ENCODE measurements at regions of chr15 and their contacts with region 1.

Region 1: GRCh38 chr15:75801859-75802593 is 41.2 kb upstream of the UBE2Q2 start:
- DNase-seq: peak; percentile 84
- H3K4me3 ChIP-seq: peak overlapping the region in 1 of 4 donors; percentile 31
- H3K27ac ChIP-seq: no peak overlapping the region
- H3K4me1 ChIP-seq: peaks cover 0 to 5% (median 2%) of the 10 kb centered on the region in 4 donors
- H3K27me3 ChIP-seq: peaks cover 39% of the 10 kb centered on the region
- CTCF ChIP-seq: peak; percentile 83 to 96 (median 93)
- EP300 ChIP-seq: no peak
- POLR2A ChIP-seq: no peak

Region 2: GRCh38 chr15:74373731-74374647 is 1428.0 kb before region 1 on chr15:
- in situ Hi-C with region 1: no loop called
- intact Hi-C with region 1: no loop called
- DNase-seq: peak; percentile 95
- H3K4me3 ChIP-seq: peak overlapping the region; percentile 38 to 70 (median 47)
- H3K27ac ChIP-seq: peak overlapping the region; percentile 33 to 57 (median 46)
- H3K4me1 ChIP-seq: peaks cover 9 to 19% (median 13%) of the 10 kb centered on the region in 4 donors
- H3K27me3 ChIP-seq: peaks cover 13% of the 10 kb centered on the region
- CTCF ChIP-seq: peak; percentile 80 to 93 (median 83)
- EP300 ChIP-seq: no peak
- POLR2A ChIP-seq: no peak

Region 3: DNA sequence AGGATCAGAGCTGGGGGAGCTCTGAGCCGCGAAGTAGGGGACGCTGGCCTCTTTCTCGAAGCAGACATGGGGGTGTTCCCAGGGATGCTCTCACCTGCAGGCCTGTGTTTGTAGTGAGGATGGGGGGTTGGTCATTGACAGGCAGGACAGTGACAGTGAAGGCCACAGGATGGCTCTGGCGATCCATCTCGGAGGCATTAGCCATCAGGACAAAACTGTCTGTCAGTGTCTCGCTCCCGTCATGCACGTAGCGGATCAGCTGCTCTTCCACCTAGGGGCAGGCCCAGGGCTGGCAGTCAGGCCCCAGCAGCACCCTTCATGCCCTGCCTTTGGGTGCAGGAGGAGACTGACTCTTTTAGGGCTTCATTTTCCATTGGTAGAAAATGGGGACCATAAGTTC is 117.4 kb before region 1 on chr15:
- in situ Hi-C with region 1: loop called in 1 of 4 experiments (anchors 10 kb)
- intact Hi-C with region 1: loop called (anchors 5 kb)
- DNase-seq: no peak
- H3K4me3 ChIP-seq: no peak overlapping the region
- H3K27ac ChIP-seq: no peak overlapping the region
- H3K4me1 ChIP-seq: peaks cover 0 to 10% (median 4%) of the 10 kb centered on the region in 4 donors
- H3K27me3 ChIP-seq: no peaks in the 10 kb centered on the region
- CTCF ChIP-seq: no peak
- EP300 ChIP-seq: no peak
- POLR2A ChIP-seq: no peak

Region 4: DNA sequence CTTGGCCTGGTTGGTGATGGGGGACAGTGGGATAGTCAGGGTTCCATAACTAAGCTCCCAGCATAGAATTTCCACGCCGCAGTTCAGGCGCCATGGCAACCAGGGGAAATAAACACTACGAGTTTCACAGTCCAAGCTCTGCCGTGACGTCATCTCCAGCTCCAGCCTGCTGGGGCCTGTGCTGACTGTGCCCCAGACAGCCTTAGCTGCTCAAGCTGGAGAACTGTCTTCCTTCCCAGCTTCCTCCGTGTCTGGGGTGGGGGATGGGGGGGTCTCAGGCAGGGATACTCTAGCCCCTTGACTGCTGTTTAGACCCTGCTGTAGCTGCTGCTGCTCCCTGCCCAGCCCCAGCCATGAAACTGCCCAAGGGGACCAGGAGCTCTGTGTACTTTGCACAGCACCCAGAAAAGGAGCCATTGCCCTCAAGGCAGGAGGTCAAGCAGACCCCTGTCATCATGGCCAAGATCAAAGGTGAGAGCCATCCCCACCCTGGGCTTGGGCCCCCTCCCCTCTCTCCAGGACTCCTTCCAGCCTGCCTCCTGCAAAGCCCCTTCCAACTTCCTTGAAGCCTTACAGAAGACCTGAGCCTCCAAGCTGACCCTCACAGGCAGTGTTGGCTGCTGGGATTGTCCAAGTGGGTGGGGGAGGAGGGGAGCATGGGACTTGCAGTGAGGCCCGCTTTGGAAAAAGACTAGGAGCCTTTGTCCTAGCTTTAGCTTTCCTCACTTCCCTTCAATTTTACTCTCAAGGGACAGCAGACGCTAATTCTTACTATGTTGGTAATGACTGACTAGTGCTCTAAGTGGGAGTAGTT is 78.0 kb before region 1 on chr15:
- in situ Hi-C with region 1: loop called in 1 of 4 experiments (anchors 10 kb)
- intact Hi-C with region 1: no loop called
- DNase-seq: peak; percentile 94
- H3K4me3 ChIP-seq: no peak overlapping the region
- H3K27ac ChIP-seq: peak overlapping the region; percentile 76 to 88 (median 80)
- H3K4me1 ChIP-seq: peaks cover 15 to 32% (median 22%) of the 10 kb centered on the region in 4 donors
- H3K27me3 ChIP-seq: no peaks in the 10 kb centered on the region
- CTCF ChIP-seq: no peak
- EP300 ChIP-seq: no peak
- POLR2A ChIP-seq: peak; percentile 37

Region 5: DNA sequence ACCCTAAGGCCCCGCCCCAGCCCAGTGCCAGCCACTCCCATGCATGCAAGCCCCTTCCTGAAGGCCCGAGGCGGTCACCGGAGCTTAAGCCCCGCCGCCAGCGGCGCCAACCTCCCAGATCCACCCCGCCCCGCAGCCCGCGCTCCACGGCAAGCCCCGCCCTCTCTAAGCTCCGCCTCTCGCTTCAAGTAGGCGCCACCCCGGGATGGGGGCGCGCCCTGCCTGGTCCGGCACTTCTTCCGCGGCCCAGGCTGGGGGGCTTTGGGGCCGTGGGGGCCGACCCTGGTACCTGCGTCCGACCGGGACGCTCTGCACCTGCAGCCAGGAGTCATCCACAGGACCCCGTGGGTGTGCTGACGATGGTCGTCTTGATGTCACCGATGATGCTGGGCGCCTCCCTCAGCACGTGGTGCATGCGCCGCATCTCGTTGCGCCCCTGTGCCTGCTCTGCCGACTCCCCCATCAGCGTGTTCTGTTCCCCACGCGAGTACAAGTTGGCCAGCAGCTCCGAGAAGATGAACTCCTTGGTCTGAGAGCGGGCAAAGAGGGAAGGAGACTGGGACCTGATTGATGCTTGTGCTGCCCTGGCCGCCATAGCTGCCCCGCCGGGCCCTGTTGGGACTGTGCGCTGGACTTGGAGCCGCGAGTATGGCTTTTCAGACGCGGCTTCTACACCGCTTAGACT is 63.2 kb before region 1 on chr15:
- in situ Hi-C with region 1: loop called in 1 of 4 experiments (anchors 10 kb)
- intact Hi-C with region 1: loop called (anchors 10 kb)
- DNase-seq: peak; percentile 97
- H3K4me3 ChIP-seq: peak overlapping the region; percentile 63 to 96 (median 64)
- H3K27ac ChIP-seq: peak overlapping the region; percentile 66 to 84 (median 77)
- H3K4me1 ChIP-seq: peaks cover 0 to 12% (median 8%) of the 10 kb centered on the region in 4 donors
- H3K27me3 ChIP-seq: no peaks in the 10 kb centered on the region
- CTCF ChIP-seq: no peak
- EP300 ChIP-seq: no peak
- POLR2A ChIP-seq: no peak

Region 6: DNA sequence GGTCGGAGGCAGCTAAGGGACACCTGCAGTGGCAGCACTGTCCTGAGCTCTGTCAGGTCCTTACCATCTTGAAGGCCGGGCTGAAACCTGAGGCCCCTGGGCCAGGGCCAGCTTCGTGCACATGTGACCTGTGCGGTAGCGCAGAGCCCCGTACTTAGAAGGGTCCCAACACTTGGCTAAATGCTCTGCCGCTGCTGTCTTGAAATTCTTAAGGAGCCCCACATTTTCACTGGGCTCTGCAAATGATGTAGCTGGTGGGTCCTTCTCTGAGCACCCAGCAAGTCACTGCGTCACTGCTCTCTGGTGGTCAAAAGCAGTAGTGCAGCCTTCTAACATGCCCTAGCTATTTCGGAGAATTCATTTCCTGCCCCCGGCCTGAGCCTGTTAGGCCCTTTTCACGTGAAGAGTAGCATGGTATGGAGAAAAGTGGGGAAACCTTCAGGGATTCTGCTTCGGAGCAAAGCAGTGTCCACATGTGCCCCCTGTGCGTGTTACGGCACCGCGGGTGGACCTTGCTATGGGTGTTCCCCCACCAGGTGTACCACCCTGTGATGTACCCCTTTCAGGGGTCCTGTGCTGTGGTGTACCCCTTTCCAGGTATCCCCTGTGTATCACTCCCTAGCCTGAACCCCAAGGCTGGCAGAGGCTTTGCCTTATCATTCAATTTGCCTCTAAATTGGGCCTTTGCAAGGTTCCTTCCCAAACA is 337.5 kb after region 1 on chr15:
- in situ Hi-C with region 1: loop called in 2 of 4 experiments (anchors 25 kb)
- intact Hi-C with region 1: no loop called
- DNase-seq: peak; percentile 76
- H3K4me3 ChIP-seq: no peak overlapping the region
- H3K27ac ChIP-seq: no peak overlapping the region
- H3K4me1 ChIP-seq: peaks cover 0 to 10% (median 5%) of the 10 kb centered on the region in 4 donors
- H3K27me3 ChIP-seq: peaks cover 8% of the 10 kb centered on the region
- CTCF ChIP-seq: peak; percentile 87 to 94 (median 90)
- EP300 ChIP-seq: no peak
- POLR2A ChIP-seq: no peak

Measured in transverse colon (tissue), 4 donors.